ENCODE measurements at regions of chr2 and their contacts with region 1.

Region 1: DNA sequence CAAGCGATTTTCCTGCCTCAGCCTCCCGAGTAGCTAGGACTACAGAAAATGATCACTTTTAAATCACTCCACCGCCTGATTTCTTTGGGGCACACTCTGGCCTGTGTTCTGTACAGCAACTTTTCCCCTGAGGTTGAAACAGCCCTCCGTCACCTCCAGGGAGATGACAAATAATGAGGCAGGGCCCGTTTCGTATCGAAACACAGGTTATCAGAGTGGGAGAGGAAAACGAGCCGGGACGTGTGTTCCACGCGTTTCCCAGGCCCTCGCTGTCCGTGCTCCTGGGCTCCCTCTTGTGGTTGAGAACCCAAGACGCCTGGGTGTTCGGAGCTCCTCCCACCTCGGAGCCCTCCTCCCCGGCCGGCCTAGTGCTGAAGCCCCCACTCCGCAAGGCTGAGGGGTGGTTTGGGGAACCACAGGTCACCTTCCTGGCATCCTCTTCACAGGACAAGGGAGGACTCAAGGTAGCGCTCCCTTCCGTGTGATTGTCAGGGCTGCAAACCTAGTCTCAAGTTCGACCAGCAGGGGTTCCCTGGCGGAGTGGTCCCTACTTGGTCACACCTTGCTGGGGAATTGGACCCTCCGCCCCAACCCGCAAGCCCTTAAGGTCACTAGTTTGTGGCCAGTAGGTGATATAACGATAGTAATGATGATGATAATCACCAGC is 12.8 kb downstream of the ATP6V1B1 start:
- H3K4me3 ChIP-seq: peak overlapping the region; percentile 26
- H3K27ac ChIP-seq: no peak overlapping the region
- H3K4me1 ChIP-seq: peaks cover 2% of the 10 kb centered on the region; the same call in 1 of the 2 replicates
- CTCF ChIP-seq: peak; percentile 93

Region 2: GRCh38 chr2:70789304-70790135 is 158.9 kb before region 1 on chr2:
- CTCF ChIA-PET with region 1: interaction called, 30 read pairs
- POLR2A ChIA-PET with region 1: no interaction called
- H3K4me3 ChIP-seq: no peak overlapping the region
- H3K27ac ChIP-seq: no peak overlapping the region
- H3K4me1 ChIP-seq: no peaks in the 10 kb centered on the region
- CTCF ChIP-seq: peak; percentile 84

Region 3: DNA sequence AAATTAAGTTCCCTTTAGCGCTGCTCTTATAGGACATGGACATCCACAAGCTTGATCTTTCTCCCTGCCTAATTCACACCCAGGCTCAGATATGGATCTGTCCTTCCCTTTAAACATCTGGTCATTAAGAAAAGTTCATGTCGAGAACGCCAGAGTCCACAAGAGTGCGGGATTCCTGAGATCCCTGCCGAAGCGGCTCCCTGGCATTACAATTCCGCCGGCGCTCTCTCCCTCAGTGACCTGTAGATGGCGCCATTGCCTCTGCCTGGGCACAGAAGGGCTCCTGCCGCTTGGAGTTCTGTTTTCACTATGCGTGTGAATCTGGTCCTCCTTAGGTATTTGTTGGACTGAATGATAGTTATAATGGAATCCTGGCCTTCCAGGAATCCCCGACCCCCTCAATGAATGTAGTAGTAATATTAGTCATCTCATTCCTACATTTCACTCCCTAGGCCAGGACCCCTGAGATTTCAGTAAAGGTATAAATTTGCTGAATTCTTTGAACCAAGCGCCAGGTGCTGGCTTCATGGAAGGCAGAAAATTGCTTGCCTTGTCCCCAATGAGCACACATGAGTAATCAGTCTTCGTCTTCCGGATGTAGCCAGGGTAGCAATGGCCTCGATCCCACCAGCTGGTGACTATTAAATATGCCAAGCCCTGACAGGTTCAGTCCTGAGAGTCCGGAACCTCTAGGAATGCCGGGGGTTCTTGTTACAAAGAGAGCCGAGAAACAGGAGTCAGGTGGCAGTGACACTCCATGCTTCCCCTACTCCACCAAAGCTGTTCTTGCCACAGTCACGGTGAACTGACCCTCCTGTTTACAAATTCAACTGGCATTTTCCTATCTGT is 86.5 kb before region 1 on chr2:
- CTCF ChIA-PET with region 1: interaction called, 63 read pairs
- POLR2A ChIA-PET with region 1: no interaction called
- H3K4me3 ChIP-seq: no peak overlapping the region
- H3K27ac ChIP-seq: no peak overlapping the region
- H3K4me1 ChIP-seq: no peaks in the 10 kb centered on the region
- CTCF ChIP-seq: peak; percentile 94

Region 4: GRCh38 chr2:70919672-70920366 is 28.7 kb before region 1 on chr2:
- CTCF ChIA-PET with region 1: interaction called, 45 read pairs
- POLR2A ChIA-PET with region 1: no interaction called
- H3K4me3 ChIP-seq: no peak overlapping the region
- H3K27ac ChIP-seq: no peak overlapping the region
- H3K4me1 ChIP-seq: peaks cover 3% of the 10 kb centered on the region; the same call in 1 of the 2 replicates
- CTCF ChIP-seq: peak; percentile 71; the same call in 1 of the 2 replicates

Region 5: DNA sequence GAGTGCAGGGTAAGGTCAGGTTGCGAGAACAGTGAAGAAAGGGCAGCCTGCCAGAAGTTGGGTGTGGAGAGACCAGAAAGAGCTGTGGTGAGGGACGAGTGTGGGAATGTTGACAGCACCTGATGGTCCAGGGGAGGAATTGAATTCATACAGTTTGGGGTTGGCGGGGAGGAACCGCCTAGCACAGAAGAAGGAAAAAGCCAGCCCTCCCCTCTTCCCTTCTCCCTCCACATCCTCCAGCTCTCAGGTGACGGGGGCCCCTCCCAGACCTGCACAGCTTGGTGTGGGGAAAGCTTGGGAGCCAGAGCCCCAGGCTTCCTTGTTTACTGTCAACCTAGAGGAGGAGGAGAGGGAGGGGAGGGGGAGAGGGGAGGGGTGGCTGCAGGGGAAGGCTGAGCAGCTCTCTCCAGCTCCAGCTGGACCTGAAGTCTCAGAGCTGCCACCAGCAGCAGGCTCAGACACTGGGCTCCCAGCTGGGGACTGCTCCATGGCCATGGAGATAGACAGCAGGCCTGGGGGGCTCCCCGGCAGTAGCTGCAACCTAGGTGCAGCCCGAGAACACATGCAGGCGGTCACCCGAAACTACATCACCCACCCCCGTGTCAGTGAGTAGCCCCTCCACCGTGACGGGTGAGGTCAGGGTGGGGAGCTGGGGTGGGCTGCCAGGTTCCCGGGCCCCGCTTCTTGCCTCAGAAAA is 12.9 kb before region 1 on chr2 and contains the start of gene ATP6V1B1:
- CTCF ChIA-PET with region 1: interaction called, 61 read pairs
- POLR2A ChIA-PET with region 1: no interaction called
- H3K4me3 ChIP-seq: no peak within 1 kb of the TSS
- H3K27ac ChIP-seq: no peak within 1 kb of the TSS
- H3K4me1 ChIP-seq: no peaks in the 10 kb centered on the region
- CTCF ChIP-seq: no peak

Region 6: GRCh38 chr2:70964596-70965386 is 16.3 kb after region 1 on chr2:
- CTCF ChIA-PET with region 1: interaction called, 21 read pairs
- POLR2A ChIA-PET with region 1: no interaction called
- H3K4me3 ChIP-seq: no peak overlapping the region
- H3K27ac ChIP-seq: no peak overlapping the region
- H3K4me1 ChIP-seq: no peaks in the 10 kb centered on the region
- CTCF ChIP-seq: no peak

Region 7: GRCh38 chr2:70975091-70975636 is 26.7 kb after region 1 on chr2:
- CTCF ChIA-PET with region 1: interaction called, 27 read pairs
- POLR2A ChIA-PET with region 1: no interaction called
- H3K4me3 ChIP-seq: no peak overlapping the region
- H3K27ac ChIP-seq: no peak overlapping the region
- H3K4me1 ChIP-seq: no peaks in the 10 kb centered on the region
- CTCF ChIP-seq: no peak

Measured in HEK293 (cell line).